H1 (cell line): ENCODE measurements at regions of chr1 and their contacts with region 1.

Region 1: GRCh38 chr1:167013108-167013929 is 24.2 kb downstream of the MAEL start:
- DNase-seq: no peak
- H3K4me3 ChIP-seq: no peak overlapping the region
- H3K27ac ChIP-seq: no peak overlapping the region
- H3K4me1 ChIP-seq: no peaks in the 10 kb centered on the region
- H3K27me3 ChIP-seq: no peaks in the 10 kb centered on the region
- CTCF ChIP-seq: no peak
- EP300 ChIP-seq: no peak
- POLR2A ChIP-seq: no peak
- RAD21 ChIP-seq: no peak

Region 2: DNA sequence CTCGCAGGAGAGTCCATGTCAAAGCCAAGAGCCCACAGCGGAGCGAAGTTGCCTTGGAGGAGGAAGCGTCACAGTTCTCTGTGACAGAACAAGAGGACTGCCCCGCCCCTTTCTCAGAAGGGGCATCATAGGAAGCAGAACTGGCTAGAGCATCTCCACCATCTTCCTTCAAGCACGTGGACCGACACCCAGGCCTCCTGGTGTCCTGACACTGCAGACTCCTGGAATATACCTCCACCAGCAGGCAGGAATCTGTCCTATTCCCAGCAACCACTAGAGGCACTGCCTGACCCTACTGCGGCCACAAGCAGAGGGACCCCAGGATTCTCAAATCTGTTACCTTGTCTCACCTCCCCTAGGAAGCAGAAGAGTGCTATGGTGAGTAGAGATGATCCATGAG is 39.1 kb after region 1 on chr1:
- CTCF ChIA-PET with region 1: interaction called, 12 read pairs
- POLR2A ChIA-PET with region 1: no interaction called
- DNase-seq: peak in 1 of 2 experiments; percentile 38
- H3K4me3 ChIP-seq: no peak overlapping the region
- H3K27ac ChIP-seq: no peak overlapping the region
- H3K4me1 ChIP-seq: no peaks in the 10 kb centered on the region
- H3K27me3 ChIP-seq: no peaks in the 10 kb centered on the region
- CTCF ChIP-seq: peak; percentile 86 to 92 (median 91)
- EP300 ChIP-seq: no peak
- POLR2A ChIP-seq: no peak
- RAD21 ChIP-seq: peak; percentile 62 to 73